GM12878 (cell line): ENCODE measurements at regions of chr11 and their contacts with region 1.

Region 1: GRCh38 chr11:112588252-112588694 is 327.6 kb upstream of the PLET1 start:
- DNase-seq: peak; percentile 40
- ATAC-seq: peak; percentile 78
- H3K4me3 ChIP-seq: no peak overlapping the region
- H3K27ac ChIP-seq: no peak overlapping the region
- H3K4me1 ChIP-seq: peaks cover 16% of the 10 kb centered on the region
- H3K27me3 ChIP-seq: no peaks in the 10 kb centered on the region; a peak in 1 of 4 replicates
- CTCF ChIP-seq: peak; percentile 53 to 79 (median 62)
- EP300 ChIP-seq: no peak
- POLR2A ChIP-seq: no peak
- RAD21 ChIP-seq: peak; percentile 95

Region 2: DNA sequence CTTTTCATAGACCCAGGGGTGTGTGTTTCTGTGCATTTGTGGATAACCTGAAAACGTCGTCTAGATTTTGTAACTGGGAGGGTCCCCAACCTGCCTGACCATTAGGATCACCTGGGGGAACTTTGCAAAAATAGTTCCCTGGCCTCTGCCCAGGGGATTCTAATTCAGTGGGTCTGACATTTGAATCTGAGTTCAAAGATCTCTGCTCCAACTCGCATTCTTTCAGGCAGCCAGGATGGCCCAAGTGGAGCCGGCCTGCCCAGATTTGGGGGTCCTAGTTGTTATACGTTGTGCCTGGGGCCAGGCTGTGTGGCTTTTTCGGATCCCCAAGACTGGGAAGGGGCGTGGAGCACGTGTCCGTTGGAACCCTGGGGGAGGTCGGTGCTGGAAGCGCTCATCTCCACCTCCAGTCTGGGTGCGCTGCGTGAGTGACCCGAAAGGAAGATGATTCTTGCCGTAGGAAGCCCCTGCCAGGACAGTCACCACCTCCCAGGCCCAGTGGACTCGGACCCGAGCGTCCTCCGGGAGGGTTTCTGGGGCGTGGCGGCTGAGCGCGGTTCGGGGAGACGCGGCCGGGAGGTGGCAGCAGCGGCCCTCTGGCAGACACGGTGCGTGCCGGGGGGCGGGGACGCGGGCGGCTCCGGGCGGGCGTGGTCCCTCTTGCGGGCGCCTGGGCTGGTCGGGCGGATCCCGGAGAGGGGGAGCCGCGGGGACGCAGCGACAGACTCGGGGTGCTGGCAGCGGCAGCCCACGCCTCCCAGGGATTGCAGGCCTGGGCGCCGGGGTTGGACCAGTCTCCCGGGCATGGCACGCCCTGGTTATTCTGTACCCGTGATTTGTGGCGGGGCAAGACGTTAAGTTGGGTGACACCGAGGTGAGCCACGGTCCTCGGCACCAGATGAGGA is 298.4 kb before region 1 on chr11:
- CTCF ChIA-PET with region 1: interaction called, 9 read pairs
- POLR2A ChIA-PET with region 1: no interaction called
- RAD21 ChIA-PET with region 1: interaction called, 3 read pairs
- SMC1A ChIA-PET with region 1: interaction called, 4 read pairs
- in situ Hi-C with region 1: no loop called
- intact Hi-C with region 1: loop called (anchors 1 kb)
- DNase-seq: no peak
- ATAC-seq: peak; percentile 100
- H3K4me3 ChIP-seq: peak overlapping the region; percentile 68; the same call in 1 of the 2 replicates
- H3K27ac ChIP-seq: no peak overlapping the region
- H3K4me1 ChIP-seq: peaks cover 4% of the 10 kb centered on the region; the same call in 1 of the 2 replicates
- H3K27me3 ChIP-seq: no peaks in the 10 kb centered on the region
- CTCF ChIP-seq: peak; percentile 72 to 73 (median 73)
- EP300 ChIP-seq: no peak
- POLR2A ChIP-seq: no peak
- RAD21 ChIP-seq: peak; percentile 71

Region 3: GRCh38 chr11:112334381-112334780 is 253.9 kb before region 1 on chr11:
- CTCF ChIA-PET with region 1: no interaction called
- POLR2A ChIA-PET with region 1: no interaction called
- RAD21 ChIA-PET with region 1: no interaction called
- SMC1A ChIA-PET with region 1: no interaction called
- in situ Hi-C with region 1: no loop called
- intact Hi-C with region 1: no loop called
- DNase-seq: no peak
- ATAC-seq: no peak
- H3K4me3 ChIP-seq: no peak overlapping the region
- H3K27ac ChIP-seq: no peak overlapping the region
- H3K4me1 ChIP-seq: no peaks in the 10 kb centered on the region
- H3K27me3 ChIP-seq: no peaks in the 10 kb centered on the region
- CTCF ChIP-seq: no peak
- EP300 ChIP-seq: no peak
- POLR2A ChIP-seq: no peak
- RAD21 ChIP-seq: no peak

Region 4: DNA sequence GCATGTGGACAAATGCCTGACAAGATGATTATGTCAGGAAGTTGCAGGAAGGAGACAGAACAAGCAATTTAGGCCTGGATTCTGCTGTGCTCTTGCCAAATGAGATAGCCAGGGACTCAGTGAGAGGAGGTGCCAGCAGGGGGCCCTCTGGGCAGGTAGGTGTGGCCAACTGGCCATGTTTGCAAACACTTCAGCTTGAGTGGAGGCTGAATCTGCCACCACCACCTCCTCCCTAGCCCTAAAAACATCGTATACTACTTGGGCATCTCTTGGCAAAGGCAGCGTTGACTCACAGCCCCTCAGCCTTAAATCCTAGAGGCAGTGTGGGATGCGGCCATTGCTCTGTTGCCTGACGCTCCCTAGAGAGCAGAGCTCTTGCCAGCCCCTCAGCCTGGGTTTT is 232.5 kb before region 1 on chr11:
- CTCF ChIA-PET with region 1: no interaction called
- POLR2A ChIA-PET with region 1: no interaction called
- RAD21 ChIA-PET with region 1: no interaction called
- SMC1A ChIA-PET with region 1: no interaction called
- in situ Hi-C with region 1: no loop called
- intact Hi-C with region 1: no loop called
- DNase-seq: no peak
- ATAC-seq: peak; percentile 42; the same call in 1 of the 3 replicates
- H3K4me3 ChIP-seq: no peak overlapping the region
- H3K27ac ChIP-seq: no peak overlapping the region
- H3K4me1 ChIP-seq: no peaks in the 10 kb centered on the region
- H3K27me3 ChIP-seq: no peaks in the 10 kb centered on the region
- CTCF ChIP-seq: peak; percentile 16 to 31 (median 30); a peak in 2 of 6 replicates
- EP300 ChIP-seq: no peak
- POLR2A ChIP-seq: no peak
- RAD21 ChIP-seq: no peak

Region 5: GRCh38 chr11:112627588-112628045 is 39.3 kb after region 1 on chr11:
- CTCF ChIA-PET with region 1: interaction called, 15 read pairs
- POLR2A ChIA-PET with region 1: interaction called, 3 read pairs
- RAD21 ChIA-PET with region 1: interaction called, 7 read pairs
- SMC1A ChIA-PET with region 1: interaction called, 24 read pairs
- in situ Hi-C with region 1: no loop called
- intact Hi-C with region 1: no loop called
- DNase-seq: peak; percentile 83
- ATAC-seq: peak; percentile 86
- H3K4me3 ChIP-seq: peak overlapping the region; percentile 51; the same call in 1 of the 2 replicates
- H3K27ac ChIP-seq: peak overlapping the region; percentile 88
- H3K4me1 ChIP-seq: peaks cover 61% of the 10 kb centered on the region
- H3K27me3 ChIP-seq: no peaks in the 10 kb centered on the region
- CTCF ChIP-seq: no peak
- EP300 ChIP-seq: peak; percentile 49 to 56; a peak in 3 of 4 replicates
- POLR2A ChIP-seq: peak; percentile 66
- RAD21 ChIP-seq: no peak

Region 6: GRCh38 chr11:112666253-112666652 is 78.0 kb after region 1 on chr11:
- CTCF ChIA-PET with region 1: interaction called, 10 read pairs
- POLR2A ChIA-PET with region 1: no interaction called
- RAD21 ChIA-PET with region 1: interaction called, 6 read pairs
- SMC1A ChIA-PET with region 1: interaction called, 4 read pairs
- in situ Hi-C with region 1: no loop called
- intact Hi-C with region 1: no loop called
- DNase-seq: no peak
- ATAC-seq: no peak
- H3K4me3 ChIP-seq: no peak overlapping the region
- H3K27ac ChIP-seq: no peak overlapping the region
- H3K4me1 ChIP-seq: no peaks in the 10 kb centered on the region; the same call in 1 of the 2 replicates
- H3K27me3 ChIP-seq: no peaks in the 10 kb centered on the region
- CTCF ChIP-seq: no peak
- EP300 ChIP-seq: no peak
- POLR2A ChIP-seq: no peak
- RAD21 ChIP-seq: no peak

Region 7: DNA sequence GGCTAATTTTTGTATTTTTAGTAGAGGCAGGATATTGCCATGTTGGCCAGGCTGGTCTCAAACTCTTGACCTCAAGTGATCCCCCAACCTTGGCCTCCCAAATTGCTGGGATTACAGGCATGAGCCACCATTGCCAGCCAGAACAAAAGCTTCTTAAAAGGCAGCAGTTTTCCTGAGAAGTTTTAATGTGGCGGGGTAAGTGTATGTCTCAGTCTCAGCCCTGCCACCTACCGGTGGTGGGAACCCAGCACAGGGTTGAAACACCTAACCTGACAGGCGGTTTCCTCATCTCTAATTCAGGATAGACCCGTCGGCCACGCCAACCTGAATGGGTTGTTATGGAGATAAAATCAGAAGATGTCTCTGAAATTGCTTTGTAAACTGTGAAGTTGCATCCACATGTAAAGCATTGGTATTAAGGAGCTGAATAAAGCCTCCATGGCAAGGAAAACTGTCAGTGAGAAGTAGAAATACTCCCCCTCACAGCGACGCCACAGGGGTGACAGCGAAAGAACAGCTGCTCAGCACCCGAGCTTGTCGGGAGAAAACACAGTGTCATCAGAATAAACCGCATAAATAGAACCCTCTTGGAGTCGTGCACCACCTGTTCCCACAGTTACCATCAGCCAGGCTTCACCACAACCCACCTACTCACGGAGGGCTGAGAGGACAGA is 207.0 kb after region 1 on chr11:
- CTCF ChIA-PET with region 1: interaction called, 116 read pairs
- POLR2A ChIA-PET with region 1: no interaction called
- RAD21 ChIA-PET with region 1: interaction called, 53 read pairs
- SMC1A ChIA-PET with region 1: interaction called, 77 read pairs
- in situ Hi-C with region 1: loop called (anchors 5 kb)
- intact Hi-C with region 1: loop called (anchors 1 kb)
- DNase-seq: no peak
- ATAC-seq: peak; percentile 94
- H3K4me3 ChIP-seq: no peak overlapping the region
- H3K27ac ChIP-seq: no peak overlapping the region
- H3K4me1 ChIP-seq: 0 out of 2 replicates have a peak, but pooled peaks cover 3% of the 10 kb centered on the region
- H3K27me3 ChIP-seq: no peaks in the 10 kb centered on the region; a peak in 2 of 4 replicates
- CTCF ChIP-seq: peak; percentile 66 to 77 (median 77)
- EP300 ChIP-seq: no peak
- POLR2A ChIP-seq: no peak
- RAD21 ChIP-seq: peak; percentile 64

Region 8: GRCh38 chr11:113023228-113023627 is 435.0 kb after region 1 on chr11:
- CTCF ChIA-PET with region 1: no interaction called
- POLR2A ChIA-PET with region 1: no interaction called
- RAD21 ChIA-PET with region 1: no interaction called
- SMC1A ChIA-PET with region 1: no interaction called
- in situ Hi-C with region 1: no loop called
- intact Hi-C with region 1: no loop called
- DNase-seq: no peak
- ATAC-seq: no peak
- H3K4me3 ChIP-seq: no peak overlapping the region
- H3K27ac ChIP-seq: no peak overlapping the region
- H3K4me1 ChIP-seq: no peaks in the 10 kb centered on the region
- H3K27me3 ChIP-seq: peaks cover 2 to 5% of the 10 kb centered on the region in 2 experiments; a peak in 3 of 4 replicates
- CTCF ChIP-seq: no peak
- EP300 ChIP-seq: no peak
- POLR2A ChIP-seq: no peak
- RAD21 ChIP-seq: no peak